Prostate gland (tissue), 2 donors: ENCODE measurements at regions of chr21 and their contacts with region 1.

Region 1: GRCh38 chr21:32412162-32413014 is at the start of gene EVA1C:
- DNase-seq: peak; percentile 64
- H3K4me3 ChIP-seq: peak within 1 kb of the TSS; percentile 62 to 75
- H3K27ac ChIP-seq: peak within 1 kb of the TSS; percentile 98
- H3K4me1 ChIP-seq: peaks cover 15% of the 10 kb centered on the region
- H3K27me3 ChIP-seq: no peaks in the 10 kb centered on the region
- CTCF ChIP-seq: peak; percentile 14 to 73 (median 44)
- POLR2A ChIP-seq: peak; percentile 51
- total RNA-seq, gene EVA1C: 45.7 to 48.6 TPM

Region 2: GRCh38 chr21:32463889-32464300 is 51.5 kb after region 1 on chr21:
- intact Hi-C with region 1: loop called (anchors 5 kb)
- DNase-seq: peak; percentile 54
- H3K4me3 ChIP-seq: no peak overlapping the region
- H3K27ac ChIP-seq: peak overlapping the region; percentile 70 to 79
- H3K4me1 ChIP-seq: no peaks in the 10 kb centered on the region
- H3K27me3 ChIP-seq: no peaks in the 10 kb centered on the region
- CTCF ChIP-seq: no peak
- POLR2A ChIP-seq: no peak

Region 3: GRCh38 chr21:32484706-32485380 is 72.5 kb after region 1 on chr21:
- intact Hi-C with region 1: no loop called
- DNase-seq: peak; percentile 75
- H3K4me3 ChIP-seq: no peak overlapping the region
- H3K27ac ChIP-seq: peak overlapping the region; percentile 63 to 73
- H3K4me1 ChIP-seq: no peaks in the 10 kb centered on the region
- H3K27me3 ChIP-seq: no peaks in the 10 kb centered on the region
- CTCF ChIP-seq: no peak
- POLR2A ChIP-seq: peak; percentile 62

Region 4: GRCh38 chr21:32494934-32495703 is 82.7 kb after region 1 on chr21:
- intact Hi-C with region 1: loop called (anchors 2 kb)
- DNase-seq: peak; percentile 58
- H3K4me3 ChIP-seq: no peak overlapping the region
- H3K27ac ChIP-seq: peak overlapping the region; percentile 77 to 90
- H3K4me1 ChIP-seq: peaks cover 14% of the 10 kb centered on the region
- H3K27me3 ChIP-seq: no peaks in the 10 kb centered on the region
- CTCF ChIP-seq: no peak
- POLR2A ChIP-seq: no peak